Activated naive CD4-positive, alpha-beta T cell treated with anti-CD3 and anti-CD28 coated beads for 36 hours (primary cell): ENCODE measurements at regions of chr11 and their contacts with region 1.

Region 1: DNA sequence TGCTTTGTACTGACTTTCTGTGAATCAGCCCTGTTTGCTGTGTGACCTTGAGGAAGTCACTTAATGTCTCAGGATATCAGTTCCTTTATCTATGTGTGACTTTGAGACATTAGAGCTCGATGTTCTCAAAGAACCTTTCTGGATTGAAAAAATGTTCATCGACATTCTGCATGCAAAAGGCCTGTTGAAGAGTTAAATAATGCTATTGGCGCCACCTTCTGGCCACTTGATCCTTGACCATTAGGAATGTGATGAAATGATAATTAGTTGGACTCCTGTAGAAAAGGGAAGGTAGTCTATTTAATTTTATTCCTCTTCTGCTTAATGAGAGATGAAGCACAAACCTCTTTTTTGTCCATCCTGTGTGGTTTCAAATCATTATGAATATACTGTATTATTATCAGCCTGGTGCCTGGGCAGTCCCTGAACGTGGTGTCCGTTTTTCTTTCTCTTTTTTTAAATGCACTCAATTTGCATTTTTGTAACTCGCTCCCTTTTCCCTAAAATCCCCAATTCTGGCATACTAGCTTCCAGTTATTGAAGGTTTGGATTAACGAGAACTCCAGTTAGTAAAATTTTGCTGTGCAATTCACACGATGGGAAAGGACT is 20.7 kb downstream of the ELF5 start:
- DNase-seq: peak; percentile 73
- H3K4me3 Mint-ChIP-seq: no peak overlapping the region
- H3K27ac Mint-ChIP-seq: no peak overlapping the region
- H3K4me1 Mint-ChIP-seq: no peaks in the 10 kb centered on the region
- H3K27me3 Mint-ChIP-seq: no peaks in the 10 kb centered on the region

Region 2: GRCh38 chr11:33899383-33900037 is 593.4 kb before region 1 on chr11:
- CTCF ChIA-PET with region 1: no interaction called
- intact Hi-C with region 1: no loop called
- DNase-seq: no peak
- H3K4me3 Mint-ChIP-seq: no peak overlapping the region
- H3K27ac Mint-ChIP-seq: no peak overlapping the region
- H3K4me1 Mint-ChIP-seq: peaks cover 12% of the 10 kb centered on the region
- H3K27me3 Mint-ChIP-seq: peaks cover 53% of the 10 kb centered on the region

Region 3: GRCh38 chr11:34512840-34513681 is 20.2 kb after region 1 on chr11:
- CTCF ChIA-PET with region 1: interaction called, 12 read pairs
- intact Hi-C with region 1: no loop called
- DNase-seq: peak; percentile 74
- H3K4me3 Mint-ChIP-seq: no peak overlapping the region
- H3K27ac Mint-ChIP-seq: no peak overlapping the region
- H3K4me1 Mint-ChIP-seq: no peaks in the 10 kb centered on the region
- H3K27me3 Mint-ChIP-seq: no peaks in the 10 kb centered on the region

Region 4: GRCh38 chr11:34640050-34640923 is 147.4 kb after region 1 on chr11:
- CTCF ChIA-PET with region 1: no interaction called
- intact Hi-C with region 1: no loop called
- DNase-seq: no peak
- H3K4me3 Mint-ChIP-seq: no peak overlapping the region
- H3K27ac Mint-ChIP-seq: no peak overlapping the region
- H3K4me1 Mint-ChIP-seq: peaks cover 4% of the 10 kb centered on the region
- H3K27me3 Mint-ChIP-seq: peaks cover 23% of the 10 kb centered on the region